A549 (cell line): ENCODE measurements at regions of chr14 and their contacts with region 1.

Region 1: GRCh38 chr14:49852301-49853157 is at the start of gene NEMF:
- DNase-seq: peak; percentile 89 to 92
- ATAC-seq: peak; percentile 91 to 95
- H3K4me3 ChIP-seq: peak within 1 kb of the TSS; percentile 97
- H3K27ac ChIP-seq: peak within 1 kb of the TSS; percentile 94 to 97
- H3K4me1 ChIP-seq: peaks cover 14% of the 10 kb centered on the region; the same call in 2 of the 3 replicates
- CTCF ChIP-seq: peak; percentile 97
- EP300 ChIP-seq: no peak
- POLR2A ChIP-seq: peak; percentile 85
- RAD21 ChIP-seq: peak; percentile 21 to 35; a peak in 2 of 5 replicates
- polyA plus RNA-seq, gene NEMF: 58.8 and 59.6 TPM in 2 replicates

Region 2: DNA sequence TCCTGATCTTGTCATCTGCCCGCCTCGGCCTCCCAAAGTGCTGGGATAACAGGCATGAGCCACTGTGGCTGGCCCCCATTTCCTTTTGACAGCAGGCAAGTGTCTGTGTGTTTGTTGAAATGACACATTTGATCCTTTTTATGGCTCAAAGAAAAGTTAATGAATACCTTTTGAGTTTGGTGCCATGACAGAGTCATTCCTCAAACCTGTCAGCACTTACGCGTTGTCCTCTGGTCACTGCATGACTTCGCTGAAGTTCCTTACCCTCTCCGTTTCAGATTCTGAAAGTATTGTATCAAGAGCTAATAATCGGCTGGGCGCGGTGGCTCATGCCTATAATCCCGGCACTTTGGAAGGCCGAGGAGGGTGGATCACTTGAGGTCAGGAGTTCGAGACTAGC is 32.4 kb before region 1 on chr14:
- CTCF ChIA-PET with region 1: interaction called, 10 read pairs
- POLR2A ChIA-PET with region 1: no interaction called
- DNase-seq: no peak
- ATAC-seq: no peak
- H3K4me3 ChIP-seq: no peak overlapping the region
- H3K27ac ChIP-seq: no peak overlapping the region
- H3K4me1 ChIP-seq: no peaks in the 10 kb centered on the region
- CTCF ChIP-seq: no peak
- EP300 ChIP-seq: no peak
- POLR2A ChIP-seq: no peak
- RAD21 ChIP-seq: no peak

Region 3: DNA sequence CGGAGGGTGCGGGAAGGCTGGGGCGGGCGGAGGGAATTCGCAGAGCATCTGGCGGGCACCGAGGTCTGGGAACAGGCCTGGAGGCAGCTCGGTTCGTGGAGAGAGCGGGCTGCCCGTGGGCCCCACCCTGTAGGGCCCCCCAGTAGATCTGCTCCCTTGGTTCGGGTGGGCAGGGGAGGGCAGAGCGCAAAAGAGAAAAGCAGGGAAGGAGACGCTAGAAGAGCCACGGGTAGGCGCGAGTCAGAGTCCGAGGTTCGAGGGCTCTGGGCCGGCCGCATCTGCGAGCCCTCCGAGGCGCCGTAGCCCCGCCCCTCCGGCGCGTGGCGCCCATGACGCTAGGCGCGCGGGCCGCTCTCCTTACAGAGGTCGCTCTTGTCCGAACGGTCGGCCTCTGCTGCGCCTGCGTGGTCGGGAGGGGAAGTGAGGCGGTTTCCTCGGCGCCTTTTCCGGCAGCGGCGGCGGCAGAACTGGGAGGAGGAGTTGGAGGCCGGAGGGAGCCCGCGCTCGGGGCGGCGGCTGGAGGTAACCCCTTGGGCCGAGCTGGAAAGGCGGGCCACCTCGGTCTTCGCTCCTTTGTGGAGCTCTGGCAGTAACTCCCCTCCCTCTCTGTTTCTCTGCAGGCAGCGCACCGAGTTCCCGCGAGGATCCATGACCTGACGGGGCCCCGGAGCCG is 40.2 kb after region 1 on chr14 and contains the start of gene ARF6:
- CTCF ChIA-PET with region 1: interaction called, 7 read pairs
- POLR2A ChIA-PET with region 1: interaction called, 13 read pairs
- DNase-seq: peak; percentile 87 to 98
- ATAC-seq: peak; percentile 94 to 95
- H3K4me3 ChIP-seq: peak within 1 kb of the TSS; percentile 67
- H3K27ac ChIP-seq: peak within 1 kb of the TSS; percentile 96 to 98
- H3K4me1 ChIP-seq: peaks cover 21% of the 10 kb centered on the region
- CTCF ChIP-seq: 0 out of 3 replicates have a peak, but pooled peaks have one; percentile 12
- EP300 ChIP-seq: no peak
- POLR2A ChIP-seq: peak; percentile 78
- RAD21 ChIP-seq: peak; percentile 18 to 46; a peak in 4 of 5 replicates
- polyA plus RNA-seq, gene ARF6: 29.8 and 33.3 TPM in 2 replicates

Region 4: GRCh38 chr14:50106178-50106577 is 253.6 kb after region 1 on chr14:
- CTCF ChIA-PET with region 1: interaction called, 56 read pairs
- POLR2A ChIA-PET with region 1: no interaction called
- DNase-seq: no peak
- ATAC-seq: peak in 1 of 2 experiments; percentile 39; a peak in 3 of 6 replicates
- H3K4me3 ChIP-seq: no peak overlapping the region
- H3K27ac ChIP-seq: no peak overlapping the region
- H3K4me1 ChIP-seq: peaks cover 15% of the 10 kb centered on the region; the same call in 2 of the 3 replicates
- CTCF ChIP-seq: no peak
- EP300 ChIP-seq: no peak
- POLR2A ChIP-seq: no peak
- RAD21 ChIP-seq: no peak

Region 5: GRCh38 chr14:50116181-50116956 is 263.8 kb after region 1 on chr14 and contains the start of gene VCPKMT:
- CTCF ChIA-PET with region 1: interaction called, 14 read pairs
- POLR2A ChIA-PET with region 1: interaction called, 3 read pairs
- DNase-seq: peak; percentile 76 to 91
- ATAC-seq: peak; percentile 99
- H3K4me3 ChIP-seq: peak within 1 kb of the TSS; percentile 71
- H3K27ac ChIP-seq: peak within 1 kb of the TSS; percentile 73 to 93
- H3K4me1 ChIP-seq: peaks cover 16% of the 10 kb centered on the region
- CTCF ChIP-seq: no peak
- EP300 ChIP-seq: no peak
- POLR2A ChIP-seq: peak; percentile 91
- RAD21 ChIP-seq: peak in 1 of 2 experiments; percentile 18; a peak in 1 of 5 replicates
- polyA plus RNA-seq, gene VCPKMT: 9.8 and 12.2 TPM in 2 replicates